Breast epithelium (tissue), 4 donors: ENCODE measurements at regions of chr3 and their contacts with region 1.

Region 1: GRCh38 chr3:108894981-108895380 is 58.7 kb downstream of the GUCA1C start:
- DNase-seq: no peak
- H3K4me3 ChIP-seq: no peak overlapping the region
- H3K27ac ChIP-seq: no peak overlapping the region
- H3K4me1 ChIP-seq: no peaks in the 10 kb centered on the region
- H3K27me3 ChIP-seq: no peaks in the 10 kb centered on the region
- CTCF ChIP-seq: no peak
- POLR2A ChIP-seq: no peak

Region 2: DNA sequence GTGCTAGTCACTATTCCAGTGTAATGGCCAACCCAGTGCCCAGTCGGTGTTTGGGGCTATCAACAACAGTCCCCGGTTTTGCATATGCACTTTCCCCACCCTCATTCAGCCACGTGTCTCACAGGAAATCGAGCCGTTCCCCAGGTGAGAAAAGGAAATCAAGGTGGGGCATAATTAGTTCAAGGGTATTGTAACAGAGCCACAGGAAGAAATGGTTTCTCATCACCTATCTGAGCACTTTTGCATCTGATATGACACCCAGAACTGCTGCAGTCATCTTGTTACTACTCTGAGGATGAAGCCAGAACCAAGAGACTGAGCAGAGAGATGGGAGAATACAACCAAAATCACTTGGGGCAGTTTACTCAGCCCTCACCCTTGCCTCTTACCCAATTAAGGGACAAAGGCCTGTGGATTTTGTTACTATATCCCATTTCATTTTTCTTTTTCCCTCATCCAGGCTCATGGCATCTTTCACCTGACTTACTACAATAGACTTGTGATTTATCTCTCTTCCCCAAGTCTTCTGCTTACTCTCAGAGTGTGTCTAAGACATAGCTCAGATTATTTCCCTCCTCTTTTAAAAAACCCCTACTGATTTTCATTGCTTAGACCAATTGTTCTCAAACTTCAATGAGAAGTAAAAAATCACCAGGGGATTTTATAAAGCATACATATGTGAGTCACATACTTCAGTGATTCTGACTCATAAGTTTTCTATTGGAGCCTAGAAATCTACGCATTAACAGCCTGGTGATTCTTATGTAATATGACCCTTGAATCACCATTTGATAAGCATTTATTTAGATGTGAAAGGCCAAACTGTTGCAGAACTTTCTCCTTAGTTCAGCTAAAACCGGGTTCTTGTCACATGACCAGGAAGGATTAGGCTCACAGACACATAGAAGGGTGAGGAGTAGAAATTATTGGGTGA is 31.8 kb before region 1 on chr3:
- intact Hi-C with region 1: loop called (anchors 5 kb)
- DNase-seq: no peak
- H3K4me3 ChIP-seq: no peak overlapping the region
- H3K27ac ChIP-seq: no peak overlapping the region
- H3K4me1 ChIP-seq: no peaks in the 10 kb centered on the region
- H3K27me3 ChIP-seq: no peaks in the 10 kb centered on the region
- CTCF ChIP-seq: no peak
- POLR2A ChIP-seq: no peak

Region 3: GRCh38 chr3:109806929-109807328 is 911.9 kb after region 1 on chr3:
- intact Hi-C with region 1: no loop called
- DNase-seq: no peak
- H3K4me3 ChIP-seq: no peak overlapping the region
- H3K27ac ChIP-seq: no peak overlapping the region
- H3K4me1 ChIP-seq: no peaks in the 10 kb centered on the region
- H3K27me3 ChIP-seq: no peaks in the 10 kb centered on the region
- CTCF ChIP-seq: no peak
- POLR2A ChIP-seq: no peak